ENCODE measurements at regions of chr1 and their contacts with region 1.

Region 1: DNA sequence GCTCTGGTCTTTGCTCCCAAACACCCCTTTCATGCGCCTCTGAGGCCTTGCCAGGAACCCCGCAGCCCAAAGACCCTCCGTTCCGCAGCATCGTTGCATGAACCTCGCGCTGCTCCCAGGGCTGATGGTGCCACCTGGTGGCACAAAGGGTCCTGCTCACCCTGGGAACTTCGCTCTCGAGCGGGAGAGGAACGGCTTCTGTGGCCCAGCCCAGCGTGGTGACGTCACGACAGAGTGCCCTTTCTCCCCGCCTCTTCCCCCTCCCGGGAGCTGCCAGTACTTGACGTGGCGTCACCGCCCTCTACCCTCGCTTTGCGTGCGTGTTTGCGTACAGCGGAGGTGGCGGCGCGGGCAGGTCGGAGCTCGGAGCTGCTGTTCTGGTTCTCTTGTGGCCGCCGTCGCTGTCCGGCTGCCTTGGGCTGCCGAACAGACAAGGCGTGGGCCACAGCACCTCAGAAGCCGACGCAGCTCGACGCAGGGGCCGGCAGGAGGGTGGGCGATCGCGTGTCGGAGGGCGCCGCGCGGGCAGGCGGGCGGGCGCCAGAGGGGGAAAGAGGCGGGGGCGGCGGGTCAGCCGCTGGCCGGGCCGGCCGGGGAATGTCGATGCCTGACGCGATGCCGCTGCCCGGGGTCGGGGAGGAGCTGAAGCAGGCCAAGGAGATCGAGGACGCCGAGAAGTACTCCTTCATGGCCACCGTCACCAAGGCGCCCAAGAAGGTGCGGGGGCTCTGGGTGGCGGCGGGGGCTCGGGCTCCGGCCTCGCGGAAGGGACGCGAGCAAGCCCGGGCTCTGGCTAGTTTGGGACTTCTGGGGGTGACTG is at the start of gene AHCYL1:
- DNase-seq: peak; percentile 100
- H3K4me3 ChIP-seq: peak within 1 kb of the TSS; percentile 62 to 86
- H3K27ac ChIP-seq: peak within 1 kb of the TSS; percentile 97 to 98
- H3K4me1 ChIP-seq: peaks cover 4% of the 10 kb centered on the region
- H3K27me3 ChIP-seq: no peaks in the 10 kb centered on the region
- CTCF ChIP-seq: peak; percentile 97 to 100 (median 98)
- POLR2A ChIP-seq: peak; percentile 99
- total RNA-seq, gene AHCYL1: 47.5 to 51.5 TPM

Region 2: DNA sequence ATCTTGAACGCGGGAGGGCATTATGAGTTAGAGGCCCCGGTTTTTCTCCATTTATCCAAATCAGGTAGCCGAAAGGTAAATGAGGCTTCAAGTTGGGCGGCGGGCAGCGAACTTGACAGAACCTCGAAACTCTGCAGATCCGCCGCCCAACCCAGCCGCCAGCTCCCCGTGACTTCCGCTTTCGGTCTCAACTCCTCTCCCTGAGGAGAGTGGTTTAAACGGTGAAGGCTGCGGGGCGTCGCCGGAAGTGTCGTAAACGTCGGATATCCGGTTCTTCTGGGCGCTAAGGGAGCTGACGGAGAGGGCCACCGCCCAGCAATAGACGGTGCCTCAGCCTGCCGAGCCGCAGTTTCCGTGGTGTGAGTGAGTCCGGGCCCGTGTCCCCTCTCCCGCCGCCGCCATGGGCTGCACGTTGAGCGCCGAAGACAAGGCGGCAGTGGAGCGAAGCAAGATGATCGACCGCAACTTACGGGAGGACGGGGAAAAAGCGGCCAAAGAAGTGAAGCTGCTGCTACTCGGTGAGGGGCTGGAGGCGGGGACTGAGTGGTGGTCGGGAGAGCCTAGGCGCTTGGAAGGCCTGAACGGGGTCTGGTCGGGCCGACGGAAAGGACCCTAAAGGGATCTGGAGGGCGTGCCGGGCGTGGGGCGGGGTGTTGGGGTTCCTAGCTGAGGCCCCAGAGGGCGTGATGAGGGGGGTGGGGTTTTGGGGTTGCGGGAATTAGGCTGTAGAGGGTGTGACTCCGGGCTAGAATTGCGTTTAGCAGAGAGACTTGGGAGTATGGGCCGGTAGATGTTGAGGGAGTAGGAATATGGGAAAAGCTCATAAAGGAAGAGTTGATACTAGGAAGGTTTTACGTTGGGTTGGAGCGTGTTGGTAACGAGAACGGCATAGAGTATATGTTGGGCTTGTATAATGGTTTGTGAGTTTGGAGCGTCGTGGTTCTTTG is 436.1 kb before region 1 on chr1 and contains the start of gene GNAI3:
- intact Hi-C with region 1: loop called (anchors 2 kb)
- DNase-seq: peak; percentile 97
- H3K4me3 ChIP-seq: peak within 1 kb of the TSS; percentile 71 to 76
- H3K27ac ChIP-seq: peak within 1 kb of the TSS; percentile 95 to 96
- H3K4me1 ChIP-seq: no peaks in the 10 kb centered on the region
- H3K27me3 ChIP-seq: no peaks in the 10 kb centered on the region
- CTCF ChIP-seq: peak in 1 of 4 experiments; percentile 11
- POLR2A ChIP-seq: peak; percentile 99
- total RNA-seq, gene GNAI3: 5.1 to 5.4 TPM

Region 3: GRCh38 chr1:109643385-109644230 is 341.1 kb before region 1 on chr1:
- intact Hi-C with region 1: loop called (anchors 5 kb)
- DNase-seq: peak; percentile 76
- H3K4me3 ChIP-seq: no peak overlapping the region
- H3K27ac ChIP-seq: no peak overlapping the region
- H3K4me1 ChIP-seq: no peaks in the 10 kb centered on the region
- H3K27me3 ChIP-seq: no peaks in the 10 kb centered on the region
- CTCF ChIP-seq: peak; percentile 69 to 88 (median 86)
- POLR2A ChIP-seq: no peak

Region 4: GRCh38 chr1:109667452-109668122 is 317.1 kb before region 1 on chr1 and contains the start of gene GSTM2:
- intact Hi-C with region 1: no loop called
- DNase-seq: peak; percentile 86
- H3K4me3 ChIP-seq: peak within 1 kb of the TSS; percentile 45 to 47
- H3K27ac ChIP-seq: peak within 1 kb of the TSS; percentile 6 to 43
- H3K4me1 ChIP-seq: no peaks in the 10 kb centered on the region
- H3K27me3 ChIP-seq: no peaks in the 10 kb centered on the region
- CTCF ChIP-seq: no peak
- POLR2A ChIP-seq: peak; percentile 25
- total RNA-seq, gene GSTM2: 47.5 to 79.5 TPM

Region 5: GRCh38 chr1:109773146-109773899 is 211.3 kb before region 1 on chr1:
- intact Hi-C with region 1: loop called (anchors 1 kb)
- DNase-seq: peak; percentile 89
- H3K4me3 ChIP-seq: no peak overlapping the region
- H3K27ac ChIP-seq: no peak overlapping the region
- H3K4me1 ChIP-seq: no peaks in the 10 kb centered on the region
- H3K27me3 ChIP-seq: no peaks in the 10 kb centered on the region
- CTCF ChIP-seq: peak; percentile 68 to 98 (median 94)
- POLR2A ChIP-seq: no peak

Region 6: GRCh38 chr1:109790735-109791494 is 193.8 kb before region 1 on chr1:
- intact Hi-C with region 1: loop called (anchors 5 kb)
- DNase-seq: no peak
- H3K4me3 ChIP-seq: no peak overlapping the region
- H3K27ac ChIP-seq: no peak overlapping the region
- H3K4me1 ChIP-seq: no peaks in the 10 kb centered on the region
- H3K27me3 ChIP-seq: no peaks in the 10 kb centered on the region
- CTCF ChIP-seq: peak in 2 of 4 experiments; percentile 17 to 26
- POLR2A ChIP-seq: no peak

Region 7: DNA sequence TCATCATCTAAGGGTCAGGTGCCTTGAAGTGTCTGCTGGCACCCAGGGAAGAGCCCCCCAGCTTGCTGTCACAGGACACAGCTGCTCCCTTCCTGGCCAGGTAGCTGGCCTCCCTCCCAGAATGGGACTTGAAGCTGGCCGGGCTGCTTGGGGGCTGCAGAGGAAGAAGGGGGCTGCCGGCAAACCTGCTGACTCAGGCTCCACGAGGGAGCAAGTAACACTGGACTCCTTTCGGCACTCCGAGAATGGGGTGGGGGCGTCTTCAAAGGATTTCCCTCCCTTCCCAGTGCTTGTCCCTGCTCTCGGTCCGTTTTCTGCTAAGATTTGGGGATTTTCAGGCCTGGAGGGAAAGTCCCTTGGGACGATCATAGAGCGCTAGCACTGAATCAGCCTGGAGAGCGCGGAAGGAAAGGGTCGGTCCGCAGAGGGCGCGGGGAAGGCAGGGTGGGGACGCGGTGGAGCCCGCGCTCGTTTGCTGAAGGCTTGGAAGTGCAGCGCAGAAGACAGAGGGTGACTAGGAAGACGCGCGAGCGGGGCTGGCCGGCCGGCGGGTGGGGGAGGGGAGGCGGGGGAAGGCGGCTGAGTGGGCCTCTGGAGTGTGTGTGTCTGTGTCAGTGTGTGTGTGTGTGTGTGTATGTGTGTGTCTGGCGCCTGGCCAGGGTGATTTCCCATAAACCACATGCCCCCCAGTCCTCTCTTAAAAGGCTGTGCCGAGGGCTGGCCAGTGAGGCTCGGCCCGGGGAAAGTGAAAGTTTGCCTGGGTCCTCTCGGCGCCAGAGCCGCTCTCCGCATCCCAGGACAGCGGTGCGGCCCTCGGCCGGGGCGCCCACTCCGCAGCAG is 74.3 kb before region 1 on chr1 and contains the start of gene CSF1:
- intact Hi-C with region 1: loop called (anchors 5 kb)
- DNase-seq: peak; percentile 69
- H3K4me3 ChIP-seq: peak within 1 kb of the TSS; percentile 63 to 66
- H3K27ac ChIP-seq: peak within 1 kb of the TSS; percentile 80 to 84
- H3K4me1 ChIP-seq: no peaks in the 10 kb centered on the region
- H3K27me3 ChIP-seq: no peaks in the 10 kb centered on the region
- CTCF ChIP-seq: no peak
- POLR2A ChIP-seq: peak; percentile 25
- total RNA-seq, gene CSF1: 18.4 to 31.5 TPM

Region 8: GRCh38 chr1:109927911-109928321 is 56.8 kb before region 1 on chr1:
- intact Hi-C with region 1: loop called (anchors 5 kb)
- DNase-seq: peak; percentile 56
- H3K4me3 ChIP-seq: no peak overlapping the region
- H3K27ac ChIP-seq: peak overlapping the region; percentile 68 to 73
- H3K4me1 ChIP-seq: peaks cover 7% of the 10 kb centered on the region
- H3K27me3 ChIP-seq: no peaks in the 10 kb centered on the region
- CTCF ChIP-seq: no peak
- POLR2A ChIP-seq: no peak

Region 9: DNA sequence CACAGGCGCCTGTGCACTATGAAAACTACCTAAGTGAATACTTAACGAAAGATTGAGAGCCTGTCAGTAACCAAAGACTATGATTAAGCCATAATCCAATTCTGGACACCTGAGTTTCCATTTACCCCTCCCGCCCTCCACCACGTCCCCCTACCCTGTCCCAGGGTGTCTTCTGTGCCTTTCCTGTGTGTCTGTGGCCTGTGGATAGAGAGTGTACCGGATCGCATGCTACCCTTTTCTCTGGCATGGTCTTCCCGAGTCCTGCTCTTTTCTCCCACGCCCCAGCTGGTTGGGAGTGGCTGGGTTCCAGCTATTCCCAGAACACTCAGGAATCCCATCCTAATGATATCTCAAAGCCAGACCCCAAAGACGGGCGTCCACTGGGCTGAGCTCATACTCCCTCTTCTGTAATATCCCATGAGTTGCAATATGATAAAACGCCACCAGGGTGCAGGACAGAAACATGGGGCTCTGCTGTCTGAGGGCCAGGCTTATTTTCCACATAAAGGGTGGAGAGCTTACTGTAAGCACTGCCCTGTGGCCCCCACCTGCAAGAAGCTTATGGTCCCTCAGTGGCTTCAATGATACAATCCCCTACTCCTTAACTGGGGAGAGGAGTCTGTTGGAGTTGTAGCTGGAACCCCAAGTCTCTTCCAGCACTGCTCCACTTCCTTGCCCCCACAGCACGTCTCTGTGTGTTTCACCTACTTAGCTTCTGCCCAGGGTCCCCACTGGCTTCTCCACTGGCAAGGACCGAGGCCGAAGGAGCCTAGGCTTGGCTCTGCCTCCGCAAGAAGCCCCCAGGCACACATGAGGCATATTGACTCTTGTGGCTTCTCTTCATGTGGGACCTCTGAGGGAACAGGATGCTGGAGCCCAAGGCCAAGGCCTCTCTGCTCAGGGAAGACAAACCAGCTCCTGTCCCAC is 103.4 kb after region 1 on chr1:
- intact Hi-C with region 1: no loop called
- DNase-seq: peak; percentile 43
- H3K4me3 ChIP-seq: no peak overlapping the region
- H3K27ac ChIP-seq: no peak overlapping the region
- H3K4me1 ChIP-seq: no peaks in the 10 kb centered on the region
- H3K27me3 ChIP-seq: no peaks in the 10 kb centered on the region
- CTCF ChIP-seq: peak; percentile 40 to 62 (median 51)
- POLR2A ChIP-seq: no peak